Cardiac septum (tissue), 1 donor: ENCODE measurements at regions of chr12 and their contacts with region 1.

Region 1: DNA sequence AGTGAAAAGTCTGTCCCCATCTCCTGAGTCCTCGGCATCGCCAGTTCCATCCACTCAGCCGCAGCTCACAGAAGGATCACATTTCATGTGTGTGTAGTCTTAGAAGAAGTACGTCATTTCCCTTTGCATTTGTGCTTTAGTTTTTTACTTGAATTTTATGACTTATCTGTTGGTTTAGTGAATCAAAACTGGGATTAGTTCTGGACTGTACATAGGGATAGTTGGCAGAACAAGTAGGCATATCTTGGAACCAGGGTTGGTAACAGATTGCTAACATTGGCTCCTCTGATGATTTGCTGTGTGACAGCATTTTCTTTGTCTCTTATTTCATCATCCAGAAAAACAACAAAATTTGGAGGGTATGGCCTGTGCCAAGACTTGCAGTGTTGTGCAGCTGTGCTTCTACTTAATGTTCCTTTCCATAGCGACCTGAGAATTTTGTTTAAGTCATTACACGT is 69.6 kb upstream of the AEBP2 start:
- DNase-seq: no peak

Region 2: GRCh38 chr12:19451196-19451595 is 81.5 kb after region 1 on chr12:
- intact Hi-C with region 1: loop called (anchors 10 kb)
- DNase-seq: no peak

Region 3: GRCh38 chr12:20024194-20024593 is 654.5 kb after region 1 on chr12:
- intact Hi-C with region 1: no loop called
- DNase-seq: no peak